SK-N-SH (cell line): ENCODE measurements at regions of chr5 and their contacts with region 1.

Region 1: GRCh38 chr5:102296178-102296817 is at the start of gene SLCO4C1:
- DNase-seq: peak; percentile 91
- H3K4me3 ChIP-seq: peak within 1 kb of the TSS; percentile 53 to 59
- H3K27ac ChIP-seq: no peak within 1 kb of the TSS; a peak in 1 of 4 replicates
- H3K4me1 ChIP-seq: peaks cover 0 to 5% of the 10 kb centered on the region in 2 experiments; a peak in 1 of 4 replicates
- H3K27me3 ChIP-seq: no peaks in the 10 kb centered on the region
- CTCF ChIP-seq: peak; percentile 58
- EP300 ChIP-seq: no peak
- RAD21 ChIP-seq: peak; percentile 53
- polyA plus RNA-seq, gene SLCO4C1: 0.02 TPM in 1 of 2 replicates, not detected in the other

Region 2: GRCh38 chr5:102271759-102272158 is 24.5 kb before region 1 on chr5:
- CTCF ChIA-PET with region 1: interaction called, 25 read pairs
- POLR2A ChIA-PET with region 1: no interaction called
- DNase-seq: no peak
- H3K4me3 ChIP-seq: no peak overlapping the region
- H3K27ac ChIP-seq: no peak overlapping the region
- H3K4me1 ChIP-seq: no peaks in the 10 kb centered on the region
- H3K27me3 ChIP-seq: no peaks in the 10 kb centered on the region
- CTCF ChIP-seq: no peak
- EP300 ChIP-seq: no peak
- RAD21 ChIP-seq: no peak

Region 3: DNA sequence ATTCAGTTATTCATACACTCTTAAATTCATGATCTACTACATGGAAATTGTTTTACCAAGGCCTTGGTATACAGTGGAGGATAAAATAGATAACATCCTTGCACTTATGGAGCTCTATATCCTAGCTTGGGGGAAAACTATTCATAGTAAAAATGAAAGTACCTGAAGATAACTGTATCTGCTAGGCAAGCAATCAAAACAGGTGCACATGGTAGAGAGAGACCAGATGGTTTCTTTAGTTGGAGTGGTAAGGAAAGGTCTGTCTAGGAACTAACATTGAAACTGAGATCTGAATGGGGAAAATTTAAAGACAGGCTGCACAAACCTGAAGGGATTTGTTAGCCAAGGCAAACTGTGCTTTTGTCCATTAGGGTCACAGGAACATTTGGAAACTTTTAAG is 10.9 kb after region 1 on chr5:
- CTCF ChIA-PET with region 1: interaction called, 30 read pairs
- POLR2A ChIA-PET with region 1: no interaction called
- DNase-seq: no peak
- H3K4me3 ChIP-seq: no peak overlapping the region
- H3K27ac ChIP-seq: no peak overlapping the region
- H3K4me1 ChIP-seq: peaks cover 0 to 7% of the 10 kb centered on the region in 2 experiments; a peak in 2 of 4 replicates
- H3K27me3 ChIP-seq: no peaks in the 10 kb centered on the region
- CTCF ChIP-seq: no peak
- EP300 ChIP-seq: no peak
- RAD21 ChIP-seq: no peak

Region 4: DNA sequence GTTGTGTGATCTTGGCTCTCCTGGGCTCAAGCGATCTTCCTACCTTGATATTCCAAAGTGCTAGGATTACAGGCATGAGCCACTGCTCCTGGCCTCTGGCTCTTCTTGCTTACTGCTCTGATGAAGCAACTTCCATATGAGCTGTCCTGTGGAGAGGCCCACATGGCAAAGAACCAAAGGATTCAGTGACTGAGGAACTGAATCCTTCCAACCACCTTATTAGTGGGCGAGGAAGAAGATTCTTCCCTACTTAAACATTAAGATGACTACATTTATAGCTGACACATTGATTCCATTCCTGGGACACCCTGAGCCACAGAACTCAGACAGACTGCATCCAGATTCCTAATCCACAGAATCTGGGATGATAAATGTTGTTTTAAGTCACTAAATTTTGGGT is 16.3 kb after region 1 on chr5:
- CTCF ChIA-PET with region 1: interaction called, 30 read pairs
- POLR2A ChIA-PET with region 1: no interaction called
- DNase-seq: no peak
- H3K4me3 ChIP-seq: no peak overlapping the region
- H3K27ac ChIP-seq: no peak overlapping the region
- H3K4me1 ChIP-seq: peaks cover 0 to 6% of the 10 kb centered on the region in 2 experiments; a peak in 2 of 4 replicates
- H3K27me3 ChIP-seq: no peaks in the 10 kb centered on the region
- CTCF ChIP-seq: no peak
- EP300 ChIP-seq: no peak
- RAD21 ChIP-seq: no peak